Ovary (tissue), 10 donors: ENCODE measurements at regions of chr1 and their contacts with region 1.

Region 1: GRCh38 chr1:52216907-52217458 is 75.1 kb downstream of the ZFYVE9 start:
- DNase-seq: no peak
- H3K4me3 ChIP-seq: no peak overlapping the region
- H3K27ac ChIP-seq: no peak overlapping the region
- H3K4me1 ChIP-seq: no peaks in the 10 kb centered on the region
- H3K27me3 ChIP-seq: no peaks in the 10 kb centered on the region
- CTCF ChIP-seq: no peak
- EP300 ChIP-seq: no peak
- POLR2A ChIP-seq: no peak

Region 2: GRCh38 chr1:51549016-51549619 is 667.9 kb before region 1 on chr1:
- intact Hi-C with region 1: loop called in 1 of 4 experiments (anchors 5 kb)
- DNase-seq: no peak
- H3K4me3 ChIP-seq: no peak overlapping the region
- H3K27ac ChIP-seq: no peak overlapping the region
- H3K4me1 ChIP-seq: no peaks in the 10 kb centered on the region
- H3K27me3 ChIP-seq: no peaks in the 10 kb centered on the region
- CTCF ChIP-seq: no peak
- EP300 ChIP-seq: no peak
- POLR2A ChIP-seq: no peak